ENCODE measurements at regions of chr11 and their contacts with region 1.

Region 1: DNA sequence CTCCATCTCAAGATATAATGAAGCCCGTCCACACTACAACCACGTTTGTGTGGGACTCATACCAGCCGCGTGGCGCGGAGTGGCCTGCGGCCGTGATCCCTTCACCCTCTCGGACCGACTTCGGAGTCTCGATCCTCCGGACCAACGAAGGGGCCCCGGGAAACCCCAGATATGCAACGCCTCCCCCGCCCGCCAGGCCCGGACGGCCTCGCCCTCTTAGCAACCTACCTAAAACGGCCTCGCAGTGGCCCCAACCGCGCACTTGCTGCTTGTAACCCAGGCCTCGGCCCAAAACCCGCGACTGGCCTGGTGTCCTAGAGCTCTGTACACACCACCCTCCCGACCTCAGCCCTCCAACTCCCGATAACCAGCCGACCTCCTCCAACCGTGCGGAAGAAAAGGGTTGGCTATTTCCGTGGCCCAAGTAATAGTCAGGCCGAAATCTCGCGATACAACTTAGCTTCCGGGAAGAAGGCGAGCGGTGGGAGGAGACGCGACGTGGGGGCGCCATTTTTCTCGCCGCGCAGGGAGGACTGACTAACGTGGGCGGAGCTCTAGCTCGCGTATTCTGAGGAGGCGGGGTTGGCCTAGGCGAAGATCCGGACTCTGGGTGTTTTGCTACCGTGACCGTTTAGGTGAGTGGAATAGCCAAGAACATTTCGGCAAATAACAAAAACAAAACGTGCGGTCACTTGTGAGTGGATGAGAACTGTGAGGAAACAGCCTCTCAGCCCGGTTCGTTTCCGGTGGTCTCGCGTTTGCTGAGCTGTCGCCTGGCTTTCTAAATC is at the starts of genes C11orf54 and TAF1D:
- DNase-seq: peak; percentile 98
- ATAC-seq: peak; percentile 92
- H3K4me3 Mint-ChIP-seq: peak within 1 kb of the TSS; percentile 95
- H3K27ac Mint-ChIP-seq: peak within 1 kb of the TSS; percentile 99
- H3K4me1 Mint-ChIP-seq: peaks cover 49% of the 10 kb centered on the region
- H3K27me3 Mint-ChIP-seq: no peaks in the 10 kb centered on the region
- total RNA-seq, gene C11orf54: 17.1 to 18.3 TPM
- total RNA-seq, gene TAF1D: 201 to 221 TPM

Region 2: DNA sequence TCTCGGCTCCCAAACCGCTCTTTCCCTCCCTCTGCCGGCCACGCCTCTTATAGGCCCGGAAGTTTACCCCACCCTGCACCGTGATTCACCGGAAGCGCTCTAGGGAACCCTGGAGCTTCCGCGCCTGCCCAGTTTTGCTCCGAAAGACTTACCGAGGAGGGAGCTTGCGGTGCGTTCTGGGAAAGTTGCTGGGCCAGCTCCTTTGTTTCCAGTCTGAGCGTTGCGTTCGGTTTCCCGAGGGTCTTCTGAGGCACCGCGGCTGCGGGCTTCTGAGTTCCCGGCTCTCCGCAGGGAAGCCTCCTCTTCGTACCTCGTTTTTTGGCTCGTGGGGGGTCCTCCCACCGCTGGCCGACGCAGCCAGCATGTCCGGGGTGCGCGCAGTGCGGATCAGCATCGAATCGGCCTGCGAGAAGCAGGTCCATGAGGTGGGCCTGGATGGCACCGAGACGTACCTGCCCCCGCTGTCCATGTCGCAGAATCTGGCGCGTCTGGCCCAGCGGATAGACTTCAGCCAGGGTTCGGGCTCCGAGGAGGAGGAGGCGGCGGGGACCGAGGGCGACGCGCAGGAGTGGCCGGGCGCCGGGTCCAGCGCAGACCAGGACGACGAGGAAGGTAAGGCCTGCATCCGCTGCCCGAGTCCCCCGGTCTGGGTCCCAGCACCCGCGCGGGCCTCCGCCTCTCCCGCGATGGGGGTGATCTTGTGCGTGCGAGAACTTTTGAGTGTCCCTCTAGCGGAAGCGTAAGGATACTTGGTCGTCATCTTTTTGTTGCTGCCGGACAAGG is 43.1 kb after region 1 on chr11 and contains the start of gene MED17:
- CTCF ChIA-PET with region 1: interaction called, 50 read pairs
- DNase-seq: peak; percentile 92
- ATAC-seq: peak; percentile 93
- H3K4me3 Mint-ChIP-seq: peak within 1 kb of the TSS; percentile 85
- H3K27ac Mint-ChIP-seq: peak within 1 kb of the TSS; percentile 86
- H3K4me1 Mint-ChIP-seq: peaks cover 42% of the 10 kb centered on the region
- H3K27me3 Mint-ChIP-seq: no peaks in the 10 kb centered on the region
- total RNA-seq, gene MED17: 38.8 to 47.2 TPM

Measured in activated CD8-positive, alpha-beta memory T cell treated with anti-CD3 and anti-CD28 coated beads, Interleukin-2, amount 10 ng/mL, durations not matched to agents 7 days and 5 days (primary cell).